Mammary epithelial cell (primary cell): ENCODE measurements at regions of chr4 and their contacts with region 1.

Region 1: GRCh38 chr4:70637239-70637913 is 8.8 kb downstream of the ENAM start:
- DNase-seq: no peak
- H3K4me3 ChIP-seq: no peak overlapping the region
- H3K27ac ChIP-seq: no peak overlapping the region
- H3K4me1 ChIP-seq: no peaks in the 10 kb centered on the region
- H3K27me3 ChIP-seq: no peaks in the 10 kb centered on the region
- CTCF ChIP-seq: no peak

Region 2: DNA sequence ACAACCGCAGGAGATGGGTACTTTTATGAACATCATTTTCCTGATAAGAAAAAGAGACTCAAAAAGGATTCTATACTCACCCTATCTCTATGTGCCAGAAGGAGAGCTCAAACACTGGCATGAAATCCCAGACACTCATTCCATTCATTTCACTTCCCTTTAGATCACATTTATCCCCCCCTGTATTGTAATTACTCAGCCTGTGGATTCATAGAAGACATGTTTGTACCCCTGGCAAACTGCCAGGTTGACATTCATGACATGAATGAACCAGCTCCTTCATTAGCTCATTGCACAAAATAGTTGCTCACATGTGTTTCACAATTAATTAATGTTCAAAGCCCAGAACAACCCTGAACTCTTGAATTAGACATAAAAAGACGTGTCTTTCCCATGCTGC is 271.9 kb before region 1 on chr4:
- CTCF ChIA-PET with region 1: no interaction called
- dilution Hi-C with region 1: no loop called
- in situ Hi-C with region 1: no loop called
- intact Hi-C with region 1: no loop called
- DNase-seq: peak; percentile 49
- H3K4me3 ChIP-seq: no peak overlapping the region
- H3K27ac ChIP-seq: no peak overlapping the region
- H3K4me1 ChIP-seq: no peaks in the 10 kb centered on the region
- H3K27me3 ChIP-seq: no peaks in the 10 kb centered on the region
- CTCF ChIP-seq: no peak

Region 3: DNA sequence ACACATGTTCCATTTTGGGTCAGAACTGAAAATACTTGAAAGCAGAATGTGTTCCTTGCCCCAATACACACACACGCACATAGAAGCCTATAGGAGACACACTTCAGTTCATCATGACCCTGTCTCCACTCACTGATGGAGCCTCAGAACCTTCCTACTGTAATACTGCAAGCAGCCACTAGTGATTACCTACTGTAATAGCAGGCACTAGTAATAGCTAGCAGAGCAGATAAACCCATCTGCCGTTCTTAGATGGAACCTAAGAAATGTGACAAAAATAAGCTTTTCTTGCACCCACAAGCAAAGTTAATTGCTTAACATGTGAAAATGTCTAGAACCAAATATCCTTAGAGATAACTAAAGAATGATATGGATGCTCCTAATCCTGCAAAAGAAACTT is 105.4 kb before region 1 on chr4:
- CTCF ChIA-PET with region 1: no interaction called
- dilution Hi-C with region 1: no loop called
- in situ Hi-C with region 1: no loop called
- intact Hi-C with region 1: no loop called
- DNase-seq: no peak
- H3K4me3 ChIP-seq: no peak overlapping the region
- H3K27ac ChIP-seq: no peak overlapping the region
- H3K4me1 ChIP-seq: no peaks in the 10 kb centered on the region
- H3K27me3 ChIP-seq: no peaks in the 10 kb centered on the region
- CTCF ChIP-seq: peak; percentile 27 to 33

Region 4: GRCh38 chr4:70833675-70834074 is 196.3 kb after region 1 on chr4:
- CTCF ChIA-PET with region 1: no interaction called
- dilution Hi-C with region 1: no loop called
- in situ Hi-C with region 1: no loop called
- intact Hi-C with region 1: no loop called
- DNase-seq: no peak
- H3K4me3 ChIP-seq: no peak overlapping the region
- H3K27ac ChIP-seq: no peak overlapping the region
- H3K4me1 ChIP-seq: peaks cover 7% of the 10 kb centered on the region
- H3K27me3 ChIP-seq: no peaks in the 10 kb centered on the region
- CTCF ChIP-seq: no peak

Region 5: GRCh38 chr4:71184195-71184781 is 546.9 kb after region 1 on chr4:
- CTCF ChIA-PET with region 1: no interaction called
- dilution Hi-C with region 1: no loop called
- in situ Hi-C with region 1: loop called in 1 of 2 experiments (anchors 25 kb)
- intact Hi-C with region 1: no loop called
- DNase-seq: peak; percentile 31
- H3K4me3 ChIP-seq: no peak overlapping the region
- H3K27ac ChIP-seq: no peak overlapping the region
- H3K4me1 ChIP-seq: peaks cover 15% of the 10 kb centered on the region
- H3K27me3 ChIP-seq: peaks cover 31% of the 10 kb centered on the region
- CTCF ChIP-seq: peak; percentile 62 to 71